ENCODE measurements at regions of chr2 and their contacts with region 1.

Region 1: DNA sequence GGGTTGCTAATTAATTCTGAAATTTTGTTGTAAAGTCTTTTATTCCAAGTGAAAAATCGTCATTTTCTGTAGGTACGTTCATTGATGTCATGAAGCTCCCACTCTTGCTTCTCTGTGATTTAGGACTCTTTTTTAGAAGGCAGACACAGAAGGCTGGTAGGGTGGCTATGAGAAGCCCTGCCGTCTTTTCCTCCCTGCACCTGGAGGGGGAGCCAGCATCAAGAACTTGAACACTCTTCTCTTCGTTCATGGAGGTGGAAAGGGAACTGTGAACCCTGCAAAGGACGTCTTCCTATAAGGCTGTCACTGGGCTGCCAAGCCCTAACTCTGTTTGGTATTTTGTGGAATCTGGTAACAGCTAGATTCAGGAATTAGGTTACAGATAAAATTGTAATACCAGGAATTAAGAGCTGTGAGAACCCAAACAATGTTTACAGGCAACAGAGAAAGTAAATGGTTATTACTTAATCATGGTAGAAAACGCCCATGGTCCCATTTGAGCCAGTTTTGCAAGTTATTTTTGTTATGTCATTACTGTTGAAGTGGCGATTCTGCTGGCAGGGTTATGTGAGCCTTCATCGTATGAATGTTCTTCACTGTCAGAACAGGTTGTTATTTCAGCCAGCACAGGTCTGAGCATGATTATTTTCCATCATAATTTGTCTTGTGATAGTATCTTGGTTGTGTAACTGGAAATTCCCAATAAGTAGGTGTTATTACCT is 112.2 kb downstream of the OSBPL6 start:
- DNase-seq: peak in 1 of 2 experiments; percentile 38
- H3K4me3 ChIP-seq: no peak overlapping the region
- H3K27ac ChIP-seq: no peak overlapping the region
- H3K4me1 ChIP-seq: peaks cover 11% of the 10 kb centered on the region; the same call in 1 of the 2 replicates
- H3K27me3 ChIP-seq: no peaks in the 10 kb centered on the region
- CTCF ChIP-seq: peak; percentile 67

Region 2: DNA sequence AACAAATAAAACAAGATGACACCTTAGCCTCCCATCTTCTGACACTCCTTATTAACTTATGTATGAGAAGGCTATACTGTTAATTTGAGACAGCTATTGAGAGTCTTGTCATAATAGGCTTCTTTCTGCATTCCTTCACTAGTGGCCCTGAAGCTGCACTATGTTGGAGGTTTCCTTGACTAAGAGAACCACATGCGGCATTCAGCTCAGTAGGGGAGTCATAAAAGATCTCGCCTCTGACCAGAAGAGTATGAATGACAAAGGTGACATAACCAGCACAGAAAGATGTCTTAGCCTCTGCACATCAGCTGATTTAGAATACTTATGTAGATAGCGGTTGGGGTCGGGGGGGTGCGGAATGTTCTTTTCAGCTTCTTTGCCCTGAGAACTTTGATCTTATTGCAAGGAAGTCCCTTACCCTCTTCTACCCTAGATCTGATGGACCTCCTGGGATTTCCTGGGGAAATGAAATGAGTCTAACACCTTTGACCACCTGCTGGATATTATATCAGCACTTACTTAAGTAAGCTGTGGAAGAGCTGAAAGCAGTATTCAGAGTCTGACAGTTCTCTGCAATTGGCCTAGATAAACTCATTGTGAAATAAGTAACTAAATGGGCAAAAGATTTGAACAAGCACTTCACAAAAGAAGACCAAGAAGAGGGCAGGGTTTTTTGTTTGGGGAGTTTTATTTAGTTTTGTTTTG is 170.0 kb before region 1 on chr2:
- CTCF ChIA-PET with region 1: interaction called, 4 read pairs
- POLR2A ChIA-PET with region 1: no interaction called
- intact Hi-C with region 1: loop called (anchors 10 kb)
- DNase-seq: no peak
- H3K4me3 ChIP-seq: no peak overlapping the region
- H3K27ac ChIP-seq: no peak overlapping the region
- H3K4me1 ChIP-seq: peaks cover 13% of the 10 kb centered on the region
- H3K27me3 ChIP-seq: no peaks in the 10 kb centered on the region
- CTCF ChIP-seq: no peak

Region 3: GRCh38 chr2:178328037-178328436 is 21.5 kb after region 1 on chr2:
- CTCF ChIA-PET with region 1: no interaction called
- POLR2A ChIA-PET with region 1: no interaction called
- intact Hi-C with region 1: no loop called
- DNase-seq: no peak
- H3K4me3 ChIP-seq: no peak overlapping the region
- H3K27ac ChIP-seq: no peak overlapping the region
- H3K4me1 ChIP-seq: no peaks in the 10 kb centered on the region
- H3K27me3 ChIP-seq: no peaks in the 10 kb centered on the region
- CTCF ChIP-seq: no peak

Measured in PC-9 (cell line).